CD4-positive, alpha-beta memory T cell (primary cell): ENCODE measurements at regions of chr2 and their contacts with region 1.

Region 1: GRCh38 chr2:25362049-25362433 is 20.3 kb upstream of the DNMT3A start:
- DNase-seq: peak; percentile 90 to 95 (median 93)
- H3K4me3 ChIP-seq: peak overlapping the region; percentile 67 to 70
- H3K4me3 Mint-ChIP-seq: peak overlapping the region; percentile 88 to 94 (median 91)
- H3K27ac ChIP-seq: peak overlapping the region; percentile 69
- H3K27ac Mint-ChIP-seq: peak overlapping the region; percentile 78 to 97 (median 91)
- H3K4me1 ChIP-seq: peaks cover 11% of the 10 kb centered on the region
- H3K4me1 Mint-ChIP-seq: peaks cover 9 to 37% (median 14%) of the 10 kb centered on the region in 4 donors
- H3K27me3 ChIP-seq: no peaks in the 10 kb centered on the region
- H3K27me3 Mint-ChIP-seq: no peaks in the 10 kb centered on the region

Region 2: DNA sequence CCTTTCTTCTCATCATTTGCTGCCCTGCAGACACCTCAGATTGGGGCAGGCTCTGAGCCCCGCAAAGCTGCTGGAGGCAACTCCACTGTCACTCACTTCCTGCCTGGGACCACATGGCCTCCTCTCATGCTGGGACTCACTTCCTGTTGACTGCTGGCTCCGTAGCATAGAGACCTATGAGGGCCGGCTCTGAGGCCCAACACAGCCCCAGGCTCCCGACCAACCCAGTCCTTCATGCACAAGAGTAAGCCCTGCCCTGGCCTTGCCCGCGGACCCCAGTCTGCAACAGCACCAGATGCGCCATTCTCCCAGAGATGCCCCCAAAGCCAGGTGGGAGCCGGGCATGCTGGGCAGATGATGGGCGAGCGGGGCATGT is 76.0 kb before region 1 on chr2:
- CTCF ChIA-PET with region 1: interaction called, 8 read pairs
- POLR2A ChIA-PET with region 1: interaction called, 21 read pairs
- intact Hi-C with region 1: no loop called
- DNase-seq: peak; percentile 68 to 83 (median 75)
- H3K4me3 ChIP-seq: peak overlapping the region in 1 of 2 donors; percentile 21
- H3K4me3 Mint-ChIP-seq: peak overlapping the region; percentile 17 to 91 (median 76)
- H3K27ac ChIP-seq: peak overlapping the region; percentile 63
- H3K27ac Mint-ChIP-seq: peak overlapping the region; percentile 85 to 99 (median 97)
- H3K4me1 ChIP-seq: peaks cover 41% of the 10 kb centered on the region
- H3K4me1 Mint-ChIP-seq: peaks cover 18 to 50% (median 30%) of the 10 kb centered on the region in 4 donors
- H3K27me3 ChIP-seq: no peaks in the 10 kb centered on the region
- H3K27me3 Mint-ChIP-seq: no peaks in the 10 kb centered on the region

Region 3: DNA sequence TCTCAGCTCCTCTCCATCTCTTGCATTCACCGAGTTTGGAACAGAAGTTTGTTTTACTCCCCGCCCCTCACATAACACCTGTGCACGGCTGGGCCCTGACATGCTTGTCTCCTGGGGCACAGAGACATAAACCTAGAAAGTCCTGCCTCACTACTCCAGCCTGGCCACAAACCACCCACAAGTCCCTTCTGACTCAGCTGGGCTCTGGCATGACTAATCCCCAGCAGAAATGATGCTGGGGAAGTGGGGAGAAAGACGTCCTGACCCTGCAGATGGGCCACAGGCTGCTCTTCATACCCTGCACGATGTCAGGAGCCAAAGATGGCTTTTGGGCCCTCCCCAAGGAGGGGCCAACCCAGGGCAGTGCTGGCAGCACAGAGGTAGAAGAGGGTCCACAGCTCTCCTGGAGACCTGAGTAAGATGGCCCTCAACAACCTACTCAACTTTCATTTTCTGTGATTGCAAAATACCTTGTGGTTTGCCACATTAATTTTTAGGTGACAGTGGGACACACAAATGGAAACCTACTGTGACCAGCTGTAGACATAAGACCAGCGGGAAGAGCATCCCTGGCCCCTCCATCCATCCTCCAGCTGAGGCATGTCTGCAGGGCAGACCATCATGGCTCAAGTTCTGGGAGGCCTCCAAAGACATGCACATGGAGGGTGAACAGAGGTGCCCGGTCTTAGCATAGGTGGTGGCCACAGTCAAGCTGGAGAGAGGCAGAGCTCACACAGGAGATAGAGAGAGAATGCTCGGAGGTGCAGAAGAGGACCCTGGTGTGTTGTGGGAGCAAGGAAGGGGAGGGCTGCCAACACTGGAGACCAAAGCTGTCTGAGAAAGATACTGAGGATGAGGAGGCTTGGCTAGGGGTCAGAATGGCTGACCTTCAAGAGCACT is 60.3 kb before region 1 on chr2:
- CTCF ChIA-PET with region 1: interaction called, 4 read pairs
- POLR2A ChIA-PET with region 1: interaction called, 13 read pairs
- intact Hi-C with region 1: no loop called
- DNase-seq: peak in 3 of 5 donors; percentile 31 to 83 (median 38)
- H3K4me3 ChIP-seq: no peak overlapping the region
- H3K4me3 Mint-ChIP-seq: peak overlapping the region in 7 of 8 donors; percentile 15 to 74 (median 32)
- H3K27ac ChIP-seq: peak overlapping the region; percentile 41
- H3K27ac Mint-ChIP-seq: peak overlapping the region; percentile 76 to 97 (median 84)
- H3K4me1 ChIP-seq: peaks cover 51% of the 10 kb centered on the region
- H3K4me1 Mint-ChIP-seq: peaks cover 25 to 54% (median 42%) of the 10 kb centered on the region in 4 donors
- H3K27me3 ChIP-seq: no peaks in the 10 kb centered on the region
- H3K27me3 Mint-ChIP-seq: no peaks in the 10 kb centered on the region

Region 4: GRCh38 chr2:25314514-25315315 is 47.3 kb before region 1 on chr2:
- CTCF ChIA-PET with region 1: interaction called, 33 read pairs
- POLR2A ChIA-PET with region 1: interaction called, 20 read pairs
- intact Hi-C with region 1: loop called (anchors 1 kb)
- DNase-seq: peak; percentile 53 to 80 (median 60)
- H3K4me3 ChIP-seq: peak overlapping the region; percentile 14 to 57
- H3K4me3 Mint-ChIP-seq: peak overlapping the region; percentile 82 to 90 (median 87)
- H3K27ac ChIP-seq: peak overlapping the region; percentile 61
- H3K27ac Mint-ChIP-seq: peak overlapping the region; percentile 91 to 94 (median 92)
- H3K4me1 ChIP-seq: peaks cover 67% of the 10 kb centered on the region
- H3K4me1 Mint-ChIP-seq: peaks cover 27 to 76% (median 46%) of the 10 kb centered on the region in 4 donors
- H3K27me3 ChIP-seq: no peaks in the 10 kb centered on the region
- H3K27me3 Mint-ChIP-seq: no peaks in the 10 kb centered on the region

Region 5: GRCh38 chr2:25342372-25343186 is 19.5 kb before region 1 on chr2:
- CTCF ChIA-PET with region 1: interaction called, 35 read pairs
- POLR2A ChIA-PET with region 1: interaction called, 21 read pairs
- intact Hi-C with region 1: loop called (anchors 1 kb)
- DNase-seq: peak; percentile 78 to 83 (median 81)
- H3K4me3 ChIP-seq: peak overlapping the region in 1 of 2 donors; percentile 52
- H3K4me3 Mint-ChIP-seq: peak overlapping the region; percentile 66 to 89 (median 82)
- H3K27ac ChIP-seq: no peak overlapping the region
- H3K27ac Mint-ChIP-seq: peak overlapping the region in 3 of 7 donors; percentile 74 to 84 (median 74)
- H3K4me1 ChIP-seq: peaks cover 34% of the 10 kb centered on the region
- H3K4me1 Mint-ChIP-seq: peaks cover 10 to 35% (median 23%) of the 10 kb centered on the region in 4 donors
- H3K27me3 ChIP-seq: no peaks in the 10 kb centered on the region
- H3K27me3 Mint-ChIP-seq: no peaks in the 10 kb centered on the region

Region 6: GRCh38 chr2:25521665-25522387 is 159.8 kb after region 1 on chr2:
- CTCF ChIA-PET with region 1: interaction called, 9 read pairs
- POLR2A ChIA-PET with region 1: no interaction called
- intact Hi-C with region 1: loop called (anchors 1 kb)
- DNase-seq: peak; percentile 68 to 76 (median 72)
- H3K4me3 ChIP-seq: no peak overlapping the region
- H3K4me3 Mint-ChIP-seq: peak overlapping the region in 6 of 8 donors; percentile 4 to 75 (median 21)
- H3K27ac ChIP-seq: no peak overlapping the region
- H3K27ac Mint-ChIP-seq: peak overlapping the region in 5 of 7 donors; percentile 48 to 80 (median 54)
- H3K4me1 ChIP-seq: peaks cover 10% of the 10 kb centered on the region
- H3K4me1 Mint-ChIP-seq: peaks cover 4 to 12% (median 7%) of the 10 kb centered on the region in 4 donors
- H3K27me3 ChIP-seq: no peaks in the 10 kb centered on the region
- H3K27me3 Mint-ChIP-seq: no peaks in the 10 kb centered on the region